Gastrocnemius medialis (tissue), 4 donors: ENCODE measurements at regions of chr6 and their contacts with region 1.

Region 1: GRCh38 chr6:143410859-143411270 is 39.6 kb downstream of the ADAT2 start:
- DNase-seq: no peak
- ATAC-seq: no peak
- H3K4me3 ChIP-seq: no peak overlapping the region
- H3K27ac ChIP-seq: no peak overlapping the region
- H3K4me1 ChIP-seq: no peaks in the 10 kb centered on the region
- H3K27me3 ChIP-seq: no peaks in the 10 kb centered on the region
- CTCF ChIP-seq: no peak
- POLR2A ChIP-seq: no peak

Region 2: DNA sequence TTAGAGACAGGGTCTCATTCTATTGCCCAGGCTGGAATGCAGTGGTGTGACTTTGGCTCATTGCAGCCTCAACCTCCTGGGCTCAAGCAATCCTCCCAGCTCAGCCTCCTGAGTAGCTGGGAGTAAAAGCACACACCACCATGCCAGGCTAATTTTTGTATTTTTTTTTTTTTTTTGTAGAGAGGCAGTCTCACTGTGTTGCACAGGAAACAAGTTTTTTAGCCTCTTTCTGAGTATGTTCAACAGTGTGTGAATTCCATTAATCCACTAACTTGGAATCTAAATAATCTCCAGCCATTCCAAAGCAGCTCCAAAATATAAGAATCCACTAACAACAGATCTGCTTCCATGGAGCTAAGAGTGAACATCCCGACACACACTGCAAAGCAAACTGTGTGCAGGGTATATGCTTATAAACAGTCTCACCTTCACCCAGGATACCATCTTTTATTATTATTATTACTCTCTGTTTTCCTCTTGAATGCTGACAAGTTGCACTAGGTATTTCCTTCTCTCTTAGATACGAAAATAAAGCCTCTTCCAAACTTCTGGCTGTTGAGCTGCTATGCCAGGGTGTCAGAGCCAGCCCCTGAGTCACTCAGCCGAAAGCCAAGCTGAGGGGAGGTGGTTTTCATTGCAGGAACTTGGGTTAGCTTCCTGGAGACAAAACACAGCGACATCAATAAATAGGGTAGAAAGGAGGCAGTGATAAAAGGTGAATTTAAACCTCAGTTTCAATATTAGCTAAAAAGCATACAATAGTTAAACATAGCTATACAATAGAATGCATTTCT is 730.8 kb before region 1 on chr6:
- in situ Hi-C with region 1: loop called in 2 of 4 experiments (anchors 10 to 25 kb)
- intact Hi-C with region 1: no loop called
- DNase-seq: no peak
- ATAC-seq: no peak
- H3K4me3 ChIP-seq: no peak overlapping the region
- H3K27ac ChIP-seq: no peak overlapping the region
- H3K4me1 ChIP-seq: no peaks in the 10 kb centered on the region
- H3K27me3 ChIP-seq: no peaks in the 10 kb centered on the region
- CTCF ChIP-seq: no peak
- POLR2A ChIP-seq: no peak

Region 3: DNA sequence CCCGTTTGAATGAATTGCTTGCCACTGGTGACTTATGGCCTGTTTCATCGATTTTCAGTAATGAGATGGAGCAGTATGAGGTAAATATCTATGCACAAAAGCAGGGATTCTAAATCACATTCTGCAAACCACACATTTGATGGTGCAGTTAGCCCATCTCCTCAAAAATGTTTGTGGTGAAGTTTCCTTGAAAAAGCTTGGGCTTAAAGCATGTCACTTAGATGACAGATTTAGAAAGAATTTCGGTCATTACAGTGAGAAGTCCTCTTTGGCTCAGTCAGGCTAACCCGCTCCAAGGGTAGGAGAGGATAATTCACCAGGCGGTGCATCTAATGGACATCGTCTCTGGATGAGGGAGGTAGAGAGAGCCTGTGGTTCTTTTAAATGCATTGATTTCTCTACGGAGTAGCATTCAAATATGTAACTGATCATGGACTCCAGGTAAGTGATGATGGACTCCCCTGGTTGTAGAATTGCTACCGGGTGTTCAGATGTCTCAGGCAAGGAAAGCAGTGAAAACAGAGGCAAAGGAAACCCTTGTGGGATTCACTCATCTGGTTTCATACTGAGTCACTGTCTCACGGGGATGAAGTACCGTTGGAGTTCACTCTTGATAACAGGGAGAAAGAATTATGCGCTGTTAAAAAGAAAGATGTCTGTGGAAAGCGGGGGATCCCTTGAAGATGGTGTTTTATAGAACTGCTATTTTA is 284.8 kb before region 1 on chr6:
- in situ Hi-C with region 1: no loop called
- intact Hi-C with region 1: no loop called
- DNase-seq: no peak
- ATAC-seq: no peak
- H3K4me3 ChIP-seq: no peak overlapping the region
- H3K27ac ChIP-seq: no peak overlapping the region
- H3K4me1 ChIP-seq: no peaks in the 10 kb centered on the region
- H3K27me3 ChIP-seq: no peaks in the 10 kb centered on the region
- CTCF ChIP-seq: no peak
- POLR2A ChIP-seq: no peak

Region 4: GRCh38 chr6:143385636-143386035 is 25.2 kb before region 1 on chr6:
- in situ Hi-C with region 1: no loop called
- intact Hi-C with region 1: no loop called
- DNase-seq: no peak
- ATAC-seq: no peak
- H3K4me3 ChIP-seq: no peak overlapping the region
- H3K27ac ChIP-seq: no peak overlapping the region
- H3K4me1 ChIP-seq: no peaks in the 10 kb centered on the region
- H3K27me3 ChIP-seq: no peaks in the 10 kb centered on the region
- CTCF ChIP-seq: no peak
- POLR2A ChIP-seq: no peak

Region 5: DNA sequence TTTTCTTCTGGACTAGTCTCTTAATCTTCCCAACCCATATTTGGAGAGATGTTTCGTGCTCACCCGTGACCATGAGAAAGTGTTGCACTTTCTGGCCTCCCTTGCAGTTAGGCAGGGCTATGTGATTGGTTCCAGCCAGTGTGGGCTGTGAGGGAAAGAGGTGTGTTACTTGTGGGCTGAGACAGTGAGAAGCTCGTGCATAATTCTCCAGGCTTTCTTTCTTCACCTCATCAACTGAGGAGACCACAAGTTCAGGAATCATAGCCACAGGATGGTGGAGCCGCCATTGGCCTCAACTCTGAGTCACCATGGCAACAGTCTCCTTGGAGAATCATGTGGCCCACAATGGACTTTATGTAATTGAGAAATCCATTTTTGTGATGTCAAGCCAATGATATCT is 158.2 kb after region 1 on chr6:
- in situ Hi-C with region 1: no loop called
- intact Hi-C with region 1: no loop called
- DNase-seq: no peak
- ATAC-seq: peak in 1 of 2 donors; percentile 47
- H3K4me3 ChIP-seq: no peak overlapping the region
- H3K27ac ChIP-seq: no peak overlapping the region
- H3K4me1 ChIP-seq: no peaks in the 10 kb centered on the region
- H3K27me3 ChIP-seq: no peaks in the 10 kb centered on the region
- CTCF ChIP-seq: no peak
- POLR2A ChIP-seq: no peak